ENCODE measurements at regions of chr20 and their contacts with region 1.

Region 1: DNA sequence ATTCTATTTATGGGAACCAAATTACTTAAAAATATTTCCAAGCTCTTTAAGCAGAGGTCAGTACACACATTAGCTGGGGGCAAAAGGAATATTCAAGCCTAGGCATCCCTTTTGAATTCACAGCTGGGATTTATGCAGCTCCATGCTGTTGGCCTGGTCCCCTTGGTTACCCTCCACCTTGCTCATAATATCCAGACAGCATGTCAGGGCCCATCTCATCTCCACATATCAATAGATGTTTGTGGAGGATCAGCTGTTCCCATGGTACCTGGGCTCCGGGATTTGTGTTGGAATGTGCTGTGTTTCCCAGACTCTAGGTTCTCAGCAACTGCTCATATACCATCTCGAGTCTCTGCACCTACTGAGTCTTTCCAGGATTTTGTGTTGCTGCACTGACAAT is 534.8 kb downstream of the BMP2 start:
- DNase-seq: no peak
- H3K4me3 Mint-ChIP-seq: no peak overlapping the region
- H3K27ac Mint-ChIP-seq: peak overlapping the region; percentile 92
- H3K4me1 Mint-ChIP-seq: peaks cover 16% of the 10 kb centered on the region
- H3K27me3 Mint-ChIP-seq: no peaks in the 10 kb centered on the region
- CTCF ChIP-seq: no peak

Region 2: GRCh38 chr20:7313047-7313446 is 10.8 kb after region 1 on chr20:
- CTCF ChIA-PET with region 1: interaction called, 3 read pairs
- POLR2A ChIA-PET with region 1: interaction called, 10 read pairs
- intact Hi-C with region 1: no loop called
- DNase-seq: peak; percentile 15
- H3K4me3 Mint-ChIP-seq: no peak overlapping the region
- H3K27ac Mint-ChIP-seq: no peak overlapping the region
- H3K4me1 Mint-ChIP-seq: peaks cover 19% of the 10 kb centered on the region
- H3K27me3 Mint-ChIP-seq: no peaks in the 10 kb centered on the region
- CTCF ChIP-seq: no peak

Region 3: DNA sequence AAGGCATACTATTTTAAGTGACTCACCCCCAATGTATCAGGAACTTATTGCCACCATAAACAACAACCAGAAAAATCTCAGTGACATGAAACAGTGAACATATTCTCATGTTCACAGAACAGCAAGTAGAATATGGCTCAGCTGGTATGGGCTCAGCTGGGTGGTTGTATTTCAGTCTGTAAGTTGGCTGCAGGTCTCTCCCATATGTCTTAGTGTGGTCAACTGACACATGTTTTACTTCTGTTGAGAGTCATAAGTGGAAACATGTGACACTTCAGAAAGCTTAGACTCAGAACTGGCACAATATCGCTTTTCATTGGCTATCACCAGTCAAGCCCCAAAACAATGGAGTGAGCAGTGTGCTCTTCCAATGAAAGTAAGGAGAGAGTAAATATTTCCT is 63.9 kb after region 1 on chr20:
- CTCF ChIA-PET with region 1: no interaction called
- POLR2A ChIA-PET with region 1: no interaction called
- intact Hi-C with region 1: loop called (anchors 5 kb)
- DNase-seq: no peak
- H3K4me3 Mint-ChIP-seq: no peak overlapping the region
- H3K27ac Mint-ChIP-seq: no peak overlapping the region
- H3K4me1 Mint-ChIP-seq: peaks cover 18% of the 10 kb centered on the region
- H3K27me3 Mint-ChIP-seq: no peaks in the 10 kb centered on the region
- CTCF ChIP-seq: no peak

Region 4: GRCh38 chr20:7392542-7393206 is 90.4 kb after region 1 on chr20:
- CTCF ChIA-PET with region 1: no interaction called
- POLR2A ChIA-PET with region 1: no interaction called
- intact Hi-C with region 1: no loop called
- DNase-seq: no peak
- H3K4me3 Mint-ChIP-seq: no peak overlapping the region
- H3K27ac Mint-ChIP-seq: no peak overlapping the region
- H3K4me1 Mint-ChIP-seq: no peaks in the 10 kb centered on the region
- H3K27me3 Mint-ChIP-seq: no peaks in the 10 kb centered on the region
- CTCF ChIP-seq: no peak

Measured in MCF 10A (cell line).